Head of caudate nucleus (tissue), 42 donors: ENCODE measurements at regions of chr6 and their contacts with region 1.

Region 1: DNA sequence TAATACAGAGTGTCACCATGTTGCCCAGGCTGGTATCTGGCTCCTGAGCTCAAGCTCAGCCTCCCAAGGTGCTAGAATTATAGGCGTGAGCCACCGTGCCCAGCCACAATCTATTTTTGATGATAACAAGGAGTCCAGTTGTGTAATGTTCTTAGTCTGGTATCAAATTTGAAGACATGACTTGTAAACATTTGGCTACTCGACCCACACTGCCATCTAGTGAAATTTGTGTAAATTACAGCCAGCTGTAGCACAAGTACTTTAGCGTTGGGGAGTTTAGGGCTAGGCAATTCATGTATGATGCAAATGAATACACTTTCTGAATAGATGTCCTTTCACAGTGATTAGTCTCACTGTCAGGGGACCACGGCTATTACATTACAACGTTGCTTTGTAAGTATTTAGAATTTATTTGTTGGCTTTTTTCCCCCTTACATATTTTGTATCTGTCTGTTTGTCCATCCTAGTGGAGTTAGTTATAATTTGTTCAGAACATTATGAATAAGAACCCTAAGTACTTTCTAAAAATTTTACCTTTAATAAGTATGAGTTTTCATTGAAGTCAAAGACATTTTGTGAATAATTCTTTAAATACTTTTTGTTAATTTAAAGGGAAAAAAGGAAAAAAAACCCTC is 139.7 kb downstream of the PRDM13 start:
- DNase-seq: peak in 37 of 42 donors; percentile 17 to 85 (median 62)

Region 2: DNA sequence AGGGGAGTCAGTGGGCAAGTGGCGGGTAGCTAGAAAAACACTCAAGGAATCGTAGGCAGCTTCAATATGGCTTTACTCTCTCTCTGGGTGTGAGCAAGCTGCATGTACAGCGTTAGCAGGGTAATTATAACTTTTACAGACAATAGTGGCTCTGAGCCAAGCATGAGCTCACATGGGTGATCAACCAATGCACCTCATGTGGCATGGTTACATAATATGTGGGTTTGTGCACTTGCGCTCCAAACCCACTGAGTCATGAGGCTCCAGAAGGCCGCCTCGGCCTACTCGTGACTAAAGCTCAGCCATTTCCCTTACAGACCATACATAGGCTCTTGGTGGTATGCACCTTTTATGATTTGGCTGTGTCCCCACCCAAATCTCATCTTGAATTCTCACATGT is 720.2 kb before region 1 on chr6:
- intact Hi-C with region 1: no loop called
- DNase-seq: no peak

Region 3: DNA sequence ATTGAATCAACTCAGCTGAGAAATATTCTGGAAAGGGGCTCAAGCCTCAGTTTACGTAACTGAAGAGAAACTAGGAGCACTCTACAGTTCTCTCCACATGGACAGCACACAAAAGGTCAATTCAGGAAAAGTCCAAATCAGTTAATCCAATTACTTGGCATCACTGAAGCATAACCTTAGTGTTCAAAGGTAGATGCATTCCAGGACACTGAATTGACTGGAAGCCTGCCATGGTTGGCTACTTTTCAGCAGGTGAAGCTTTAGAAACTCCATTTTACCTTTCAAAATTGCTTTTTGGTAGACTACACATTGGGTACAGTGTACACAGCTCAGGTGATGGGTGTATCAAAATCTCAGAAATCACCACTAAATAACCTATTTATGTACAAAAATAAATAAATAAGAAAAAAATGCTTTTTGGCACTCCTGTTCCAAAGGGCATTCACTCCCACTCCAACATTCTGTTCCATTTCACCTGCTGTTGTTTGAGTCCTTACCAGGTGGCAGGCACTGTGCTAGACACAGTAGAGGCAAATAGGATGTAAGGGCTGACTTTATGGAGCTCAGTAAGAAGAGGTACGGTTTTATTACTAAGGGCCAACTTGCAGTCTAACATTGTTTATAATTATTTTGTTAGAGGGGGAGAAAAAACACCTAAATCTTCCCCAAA is 550.3 kb before region 1 on chr6:
- intact Hi-C with region 1: no loop called
- DNase-seq: no peak

Region 4: GRCh38 chr6:99458319-99458718 is 288.1 kb before region 1 on chr6:
- intact Hi-C with region 1: no loop called
- DNase-seq: no peak

Region 5: DNA sequence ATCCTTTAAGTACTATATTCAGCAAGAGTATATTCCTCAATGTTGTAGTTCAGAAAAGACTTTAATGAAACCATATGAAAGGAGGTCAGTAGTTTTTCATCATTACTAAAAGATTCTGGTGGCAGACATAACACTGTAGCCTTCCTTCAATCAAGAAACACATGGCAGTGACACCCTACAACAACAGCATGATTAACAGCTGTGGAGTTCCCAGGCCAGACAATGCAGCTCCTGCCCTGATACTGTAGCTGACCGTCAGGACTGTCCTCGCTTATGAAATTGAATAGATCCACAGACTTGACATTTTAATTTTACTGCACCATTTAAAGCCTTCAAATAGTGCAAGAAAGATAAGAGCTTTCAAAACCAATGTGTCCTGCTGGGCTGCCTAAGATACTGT is 274.7 kb before region 1 on chr6:
- intact Hi-C with region 1: loop called (anchors 10 kb)
- DNase-seq: no peak

Region 6: DNA sequence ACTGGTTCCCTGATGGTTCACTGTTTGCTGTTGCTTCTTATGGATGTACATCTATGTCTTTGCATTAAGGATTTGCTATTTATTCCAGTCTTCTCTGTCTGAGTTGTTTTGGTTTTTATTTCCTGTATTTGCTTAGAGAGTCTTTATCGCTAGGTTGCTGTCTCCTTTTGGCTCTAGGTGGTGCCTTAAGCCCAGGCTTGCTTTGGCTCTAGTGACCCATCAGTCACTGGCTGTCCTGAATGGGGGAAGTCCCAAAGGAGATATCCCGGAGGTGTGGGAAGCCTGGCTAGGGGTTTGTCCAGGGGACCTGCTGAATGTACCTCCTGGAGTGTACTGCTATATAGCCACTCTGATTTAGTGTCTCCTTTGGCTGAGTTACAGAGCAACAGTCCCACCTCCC is 194.2 kb after region 1 on chr6:
- intact Hi-C with region 1: no loop called
- DNase-seq: no peak